AG04450 (cell line): ENCODE measurements at regions of chr19 and their contacts with region 1.

Region 1: GRCh38 chr19:4909897-4910593 is 744 bp downstream of the UHRF1 start:
- DNase-seq: peak; percentile 42
- H3K4me3 ChIP-seq: peak overlapping the region; percentile 67
- H3K27ac ChIP-seq: peak overlapping the region; percentile 94
- H3K27me3 ChIP-seq: no peaks in the 10 kb centered on the region
- CTCF ChIP-seq: no peak

Region 2: DNA sequence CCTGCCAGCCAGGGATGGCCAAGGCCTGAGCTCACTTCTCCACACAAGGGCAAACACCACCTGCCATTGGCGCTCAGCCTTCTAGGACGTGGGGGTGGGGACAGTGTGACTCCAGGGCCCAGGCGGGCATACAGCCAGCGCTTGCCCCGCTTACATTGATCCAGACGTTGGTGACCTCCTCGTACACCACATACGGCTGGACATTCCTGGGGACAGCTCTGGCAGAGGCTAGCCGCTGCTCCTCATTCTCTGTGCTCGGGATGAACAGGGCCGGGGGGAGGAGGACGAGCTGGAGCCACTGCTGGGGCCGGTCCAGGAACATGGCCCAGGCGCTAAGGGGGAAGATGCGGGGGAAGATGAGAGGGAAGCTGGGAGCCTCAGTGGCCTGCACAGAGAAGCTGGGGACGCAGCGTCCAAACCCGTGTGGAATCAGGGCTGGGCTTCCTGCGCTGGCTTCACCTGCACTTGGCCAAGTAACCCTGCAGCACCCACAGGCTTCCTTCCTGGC is 214.8 kb before region 1 on chr19:
- CTCF ChIA-PET with region 1: no interaction called
- POLR2A ChIA-PET with region 1: no interaction called
- DNase-seq: no peak
- H3K4me3 ChIP-seq: no peak overlapping the region
- H3K27ac ChIP-seq: peak overlapping the region; percentile 87
- H3K27me3 ChIP-seq: no peaks in the 10 kb centered on the region
- CTCF ChIP-seq: no peak

Region 3: DNA sequence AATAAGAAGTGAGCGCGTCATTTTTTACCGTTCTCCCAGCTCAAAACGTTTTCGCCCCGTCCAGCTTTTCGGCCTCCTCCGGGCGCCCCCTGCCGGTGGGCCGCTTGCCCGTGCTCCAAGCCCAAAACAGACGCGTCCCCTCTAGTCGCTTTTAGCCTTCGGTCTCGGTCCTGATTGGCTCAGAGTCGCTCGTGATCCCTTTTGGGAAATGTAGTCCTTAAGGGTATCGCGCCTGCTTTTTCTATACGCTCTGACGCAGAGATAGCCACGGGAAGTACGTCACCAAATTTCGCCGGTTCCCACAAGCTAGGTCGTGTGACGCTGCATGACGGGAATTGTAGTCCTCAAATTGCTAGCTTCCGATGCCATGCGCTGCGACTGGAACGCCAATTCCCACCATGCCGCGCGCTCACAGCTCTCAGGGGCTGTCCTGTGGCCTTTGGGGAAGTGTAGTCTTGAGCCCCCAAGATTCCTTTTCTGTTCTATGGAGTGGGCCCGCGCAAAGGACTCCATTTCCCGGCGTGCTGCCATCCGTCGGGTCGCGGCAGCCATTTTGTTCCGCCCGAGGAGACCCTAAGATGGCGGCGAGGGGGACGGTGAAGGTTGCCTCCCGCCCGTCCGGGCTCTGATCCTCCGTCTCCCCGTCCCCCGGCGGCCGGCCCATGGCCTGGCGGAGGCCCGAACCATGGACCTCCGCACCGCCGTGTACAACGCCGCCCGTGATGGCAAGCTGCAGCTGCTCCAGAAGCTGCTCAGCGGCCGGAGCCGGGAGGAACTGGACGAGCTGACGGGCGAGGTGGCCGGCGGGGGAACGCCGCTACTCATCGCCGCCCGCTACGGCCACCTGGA is 118.7 kb before region 1 on chr19 and contains the start of gene FEM1A:
- CTCF ChIA-PET with region 1: interaction called, 7 read pairs
- POLR2A ChIA-PET with region 1: interaction called, 13 read pairs
- DNase-seq: peak; percentile 100
- H3K4me3 ChIP-seq: peak within 1 kb of the TSS; percentile 70
- H3K27ac ChIP-seq: peak within 1 kb of the TSS; percentile 39
- H3K27me3 ChIP-seq: no peaks in the 10 kb centered on the region
- CTCF ChIP-seq: peak; percentile 99
- polyA plus RNA-seq, gene FEM1A: 3.0 and 4.0 TPM in 2 replicates

Region 4: GRCh38 chr19:4844348-4845179 is 65.5 kb before region 1 on chr19:
- CTCF ChIA-PET with region 1: interaction called, 3 read pairs
- POLR2A ChIA-PET with region 1: interaction called, 12 read pairs
- DNase-seq: no peak
- H3K4me3 ChIP-seq: no peak overlapping the region
- H3K27ac ChIP-seq: peak overlapping the region; percentile 40
- H3K27me3 ChIP-seq: no peaks in the 10 kb centered on the region
- CTCF ChIP-seq: no peak

Region 5: DNA sequence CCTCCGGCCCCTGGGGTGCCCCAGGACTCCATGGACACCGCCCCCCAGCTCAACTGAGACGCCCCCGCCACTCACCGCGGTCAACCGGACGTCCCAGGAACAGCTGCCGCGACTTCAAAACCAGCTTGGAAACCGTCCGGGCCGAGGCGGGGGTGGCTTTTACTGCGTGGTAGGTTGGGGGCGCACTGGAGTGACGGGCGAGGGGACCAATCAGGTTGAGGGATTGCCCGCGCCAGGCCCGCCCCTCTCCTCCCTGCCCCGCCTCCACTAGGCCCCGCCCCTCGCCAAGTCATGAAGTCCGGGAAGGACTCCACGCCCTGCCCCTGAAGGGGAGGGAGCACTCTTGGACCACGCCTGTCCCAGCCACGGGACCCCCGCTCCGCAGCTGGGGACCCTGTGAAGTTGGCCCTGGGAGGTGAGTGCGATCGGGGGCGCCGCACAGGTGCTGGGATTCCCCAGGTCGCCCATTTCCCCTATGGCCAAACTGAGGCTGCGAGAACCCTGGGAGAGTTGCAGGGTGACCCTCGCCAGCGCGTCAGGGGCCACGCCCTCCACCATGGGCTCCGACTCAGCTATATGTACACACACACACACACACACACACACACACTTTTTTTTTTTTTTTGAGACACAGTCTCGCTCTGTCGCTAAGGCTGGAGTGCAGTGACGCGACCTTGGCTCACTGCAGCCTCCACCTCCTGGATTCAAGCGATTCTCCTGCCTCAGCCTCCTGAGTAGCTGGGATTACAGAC is 42.3 kb before region 1 on chr19 and contains the start of gene PLIN3:
- CTCF ChIA-PET with region 1: interaction called, 22 read pairs
- POLR2A ChIA-PET with region 1: interaction called, 11 read pairs
- DNase-seq: peak; percentile 92
- H3K4me3 ChIP-seq: peak within 1 kb of the TSS; percentile 89
- H3K27ac ChIP-seq: peak within 1 kb of the TSS; percentile 70
- H3K27me3 ChIP-seq: no peaks in the 10 kb centered on the region
- CTCF ChIP-seq: no peak
- polyA plus RNA-seq, gene PLIN3: 103 and 125 TPM in 2 replicates

Region 6: DNA sequence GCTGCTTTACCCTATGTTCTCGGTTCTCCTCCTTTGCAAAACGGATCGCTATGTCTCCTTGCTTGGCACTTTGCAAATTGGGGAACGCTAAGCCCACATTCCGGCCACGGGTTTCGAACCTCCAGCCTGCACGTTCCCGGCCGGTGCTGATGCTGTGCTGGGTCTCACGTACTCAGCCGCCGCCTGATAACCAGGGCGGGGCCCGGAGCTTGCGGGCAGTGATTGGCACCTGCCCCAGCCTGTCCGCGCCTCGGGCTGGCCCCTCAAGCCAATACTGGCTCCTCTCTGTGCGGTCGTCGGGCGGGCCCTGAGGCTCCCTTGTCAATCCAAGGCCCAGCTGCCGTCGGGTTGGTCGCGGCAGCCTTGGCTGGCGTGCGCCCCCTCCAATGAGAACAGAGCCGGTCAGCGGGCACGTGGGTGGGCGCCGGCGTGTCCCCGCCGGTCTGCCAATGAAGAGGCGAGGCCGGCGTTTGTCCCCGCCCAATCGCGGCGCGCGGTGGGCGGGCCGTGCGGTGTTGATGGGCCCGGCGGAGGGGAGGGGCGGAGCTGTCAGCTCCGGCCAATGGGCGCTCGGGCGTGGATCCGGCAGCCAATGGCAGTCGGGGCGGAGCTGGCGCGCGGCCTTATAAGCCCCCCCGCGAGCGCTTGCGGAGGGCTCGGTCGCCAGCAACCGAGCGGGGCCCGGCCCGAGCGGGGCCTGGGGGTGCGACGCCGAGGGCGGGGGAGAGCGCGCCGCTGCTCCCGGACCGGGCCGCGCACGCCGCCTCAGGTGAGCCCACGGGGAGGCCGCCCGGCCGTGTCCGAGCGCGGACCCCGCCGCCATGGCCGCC is 58.6 kb after region 1 on chr19 and contains the start of gene KDM4B:
- CTCF ChIA-PET with region 1: interaction called, 5 read pairs
- POLR2A ChIA-PET with region 1: interaction called, 15 read pairs
- DNase-seq: peak; percentile 99
- H3K4me3 ChIP-seq: peak within 1 kb of the TSS; percentile 84
- H3K27ac ChIP-seq: peak within 1 kb of the TSS; percentile 61
- H3K27me3 ChIP-seq: no peaks in the 10 kb centered on the region
- CTCF ChIP-seq: no peak
- polyA plus RNA-seq, gene KDM4B: 7.7 and 10.6 TPM in 2 replicates